AG04450 (cell line): ENCODE measurements at regions of chr5 and their contacts with region 1.

Region 1: GRCh38 chr5:180209137-180209581 is at the start of gene RASGEF1C:
- DNase-seq: peak; percentile 3
- H3K4me3 ChIP-seq: peak within 1 kb of the TSS; percentile 46
- H3K27ac ChIP-seq: no peak within 1 kb of the TSS
- H3K27me3 ChIP-seq: peaks cover 26% of the 10 kb centered on the region
- CTCF ChIP-seq: peak; percentile 33
- polyA plus RNA-seq, gene RASGEF1C: not detected in 2 replicates

Region 2: GRCh38 chr5:180126726-180127681 is 82.2 kb before region 1 on chr5:
- CTCF ChIA-PET with region 1: interaction called, 31 read pairs
- POLR2A ChIA-PET with region 1: no interaction called
- DNase-seq: no peak
- H3K4me3 ChIP-seq: no peak overlapping the region
- H3K27ac ChIP-seq: no peak overlapping the region
- H3K27me3 ChIP-seq: peaks cover 22% of the 10 kb centered on the region
- CTCF ChIP-seq: peak; percentile 74